Breast epithelium (tissue), 4 donors: ENCODE measurements at regions of chr1 and their contacts with region 1.

Region 1: DNA sequence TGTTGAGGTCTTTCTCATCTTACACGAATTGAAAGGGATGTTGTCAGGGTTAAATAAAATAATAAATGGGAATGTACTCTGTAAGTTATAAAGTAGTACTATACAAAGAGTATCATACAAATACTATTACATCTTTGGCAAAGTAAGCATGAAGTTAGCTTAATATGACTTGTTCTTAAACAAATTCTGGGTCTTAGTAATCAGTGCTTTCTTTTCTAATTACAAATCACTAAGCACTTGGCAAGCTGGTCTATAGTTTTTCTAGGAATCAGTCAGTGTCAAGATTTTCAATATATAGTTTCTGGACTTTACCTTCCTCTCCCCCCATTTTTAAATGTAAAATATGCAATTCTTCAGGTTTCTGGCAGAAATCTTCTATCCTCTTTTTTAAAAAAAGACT is 6.9 kb downstream of the LYST start:
- DNase-seq: no peak
- H3K4me3 ChIP-seq: no peak overlapping the region
- H3K27ac ChIP-seq: no peak overlapping the region
- H3K4me1 ChIP-seq: peaks cover 0 to 3% of the 10 kb centered on the region in 2 donors
- H3K27me3 ChIP-seq: no peaks in the 10 kb centered on the region
- CTCF ChIP-seq: no peak
- POLR2A ChIP-seq: no peak

Region 2: GRCh38 chr1:235799264-235799663 is 60.5 kb before region 1 on chr1:
- intact Hi-C with region 1: no loop called
- DNase-seq: no peak
- H3K4me3 ChIP-seq: no peak overlapping the region
- H3K27ac ChIP-seq: no peak overlapping the region
- H3K4me1 ChIP-seq: no peaks in the 10 kb centered on the region
- H3K27me3 ChIP-seq: no peaks in the 10 kb centered on the region
- CTCF ChIP-seq: no peak
- POLR2A ChIP-seq: no peak

Region 3: GRCh38 chr1:235809688-235810397 is 49.9 kb before region 1 on chr1:
- intact Hi-C with region 1: loop called (anchors 2 kb)
- DNase-seq: no peak
- H3K4me3 ChIP-seq: no peak overlapping the region
- H3K27ac ChIP-seq: no peak overlapping the region
- H3K4me1 ChIP-seq: no peaks in the 10 kb centered on the region
- H3K27me3 ChIP-seq: no peaks in the 10 kb centered on the region
- CTCF ChIP-seq: no peak
- POLR2A ChIP-seq: no peak